IMR-90 (cell line): ENCODE measurements at regions of chr2 and their contacts with region 1.

Region 1: DNA sequence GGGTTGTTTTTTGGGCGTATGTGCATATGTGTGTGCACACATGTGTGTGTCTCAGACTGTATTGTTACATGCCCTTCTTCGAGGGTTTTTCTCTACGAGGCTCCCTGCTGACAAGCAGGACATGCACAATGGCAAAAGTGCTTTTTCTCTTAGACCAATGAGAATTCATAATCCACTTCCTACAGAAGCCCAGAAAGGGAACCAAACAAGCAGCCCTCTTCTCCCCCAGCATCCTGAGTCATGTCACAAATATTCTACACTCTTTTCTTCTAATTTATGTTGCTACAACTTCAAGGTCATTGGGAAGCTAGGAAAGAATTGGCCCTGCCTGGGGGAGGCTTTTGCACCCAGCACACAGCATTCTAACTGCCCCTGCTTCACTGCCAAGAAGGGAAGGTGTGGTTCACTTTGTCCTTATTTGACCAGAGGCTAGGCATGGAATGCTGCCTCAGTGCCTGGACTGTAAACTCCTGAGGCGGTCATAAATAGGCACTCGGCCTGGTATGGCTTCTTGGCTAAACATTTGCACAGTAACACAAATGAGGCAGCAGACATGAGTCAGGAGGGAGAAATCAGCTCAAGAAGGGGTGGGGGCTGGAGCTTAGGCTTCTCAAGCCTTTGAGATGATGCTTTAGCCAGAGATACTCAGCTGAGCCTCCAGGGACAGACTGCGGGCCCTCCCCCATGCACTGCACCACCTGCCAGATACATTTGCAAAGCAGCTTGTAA is 92.7 kb upstream of the KLF7 start:
- DNase-seq: peak; percentile 100
- ATAC-seq: peak; percentile 76
- H3K4me3 ChIP-seq: no peak overlapping the region
- H3K27ac ChIP-seq: peak overlapping the region; percentile 99
- H3K4me1 ChIP-seq: peaks cover 56% of the 10 kb centered on the region
- H3K27me3 ChIP-seq: no peaks in the 10 kb centered on the region
- CTCF ChIP-seq: peak; percentile 14; the same call in 1 of the 2 replicates
- POLR2A ChIP-seq: peak; percentile 40
- RAD21 ChIP-seq: peak; percentile 45

Region 2: DNA sequence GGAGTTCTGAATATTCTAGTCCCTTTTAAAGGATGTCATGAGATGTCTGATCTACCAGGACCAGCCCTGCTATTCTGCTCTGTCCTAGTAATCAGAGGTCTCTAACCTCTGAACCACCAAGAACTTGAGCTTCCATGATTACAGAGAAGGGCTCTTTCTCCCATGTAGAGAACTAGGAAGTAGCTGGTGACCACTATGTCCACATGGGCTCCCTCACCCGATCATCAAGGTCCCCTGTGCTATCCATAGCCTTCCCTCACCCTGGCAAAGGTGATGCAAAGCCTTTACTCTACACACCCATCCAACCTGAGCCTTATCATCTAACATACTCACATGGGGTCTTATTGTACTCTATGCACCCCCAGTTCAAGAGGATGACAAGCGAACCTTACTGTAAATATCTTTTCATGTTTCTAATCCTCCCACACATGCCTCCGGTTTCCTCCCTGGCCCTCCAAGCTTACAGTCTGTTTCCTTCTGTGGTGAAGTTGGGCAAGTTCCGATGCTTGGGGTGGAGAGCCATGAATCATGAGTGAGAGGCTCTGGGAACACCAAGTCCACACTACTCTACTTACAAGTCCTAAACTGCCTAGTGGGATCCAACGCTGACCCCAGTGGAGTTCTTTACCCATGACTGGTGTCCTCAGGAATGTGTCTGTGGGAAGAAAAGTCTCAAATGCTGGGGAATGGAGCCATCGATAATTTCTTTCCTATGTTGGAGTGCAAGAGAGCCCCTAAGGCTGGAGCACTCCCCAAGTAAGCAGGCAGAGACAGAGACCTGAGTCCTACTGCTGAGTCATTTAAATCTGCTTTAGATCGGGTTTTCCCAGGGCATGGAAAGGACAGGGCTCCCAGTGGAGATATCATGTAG is 19.4 kb before region 1 on chr2:
- CTCF ChIA-PET with region 1: interaction called, 5 read pairs
- POLR2A ChIA-PET with region 1: interaction called, 11 read pairs
- dilution Hi-C with region 1: no loop called
- in situ Hi-C with region 1: no loop called
- intact Hi-C with region 1: loop called (anchors 2 kb)
- DNase-seq: peak; percentile 100
- ATAC-seq: peak; percentile 91
- H3K4me3 ChIP-seq: no peak overlapping the region
- H3K27ac ChIP-seq: peak overlapping the region; percentile 95
- H3K4me1 ChIP-seq: peaks cover 20% of the 10 kb centered on the region
- H3K27me3 ChIP-seq: no peaks in the 10 kb centered on the region
- CTCF ChIP-seq: no peak
- POLR2A ChIP-seq: peak; percentile 68; the same call in 1 of the 2 replicates
- RAD21 ChIP-seq: peak; percentile 13; the same call in 1 of the 2 replicates

Region 3: GRCh38 chr2:207311316-207312005 is 53.0 kb after region 1 on chr2:
- CTCF ChIA-PET with region 1: interaction called, 3 read pairs
- POLR2A ChIA-PET with region 1: no interaction called
- dilution Hi-C with region 1: no loop called
- in situ Hi-C with region 1: no loop called
- intact Hi-C with region 1: loop called (anchors 2 kb)
- DNase-seq: peak; percentile 100
- ATAC-seq: peak; percentile 82
- H3K4me3 ChIP-seq: no peak overlapping the region
- H3K27ac ChIP-seq: peak overlapping the region; percentile 44; the same call in 1 of the 2 replicates
- H3K4me1 ChIP-seq: peaks cover 12% of the 10 kb centered on the region
- H3K27me3 ChIP-seq: no peaks in the 10 kb centered on the region
- CTCF ChIP-seq: peak; percentile 51
- POLR2A ChIP-seq: no peak; the same call in 1 of the 2 replicates
- RAD21 ChIP-seq: peak; percentile 65

Region 4: DNA sequence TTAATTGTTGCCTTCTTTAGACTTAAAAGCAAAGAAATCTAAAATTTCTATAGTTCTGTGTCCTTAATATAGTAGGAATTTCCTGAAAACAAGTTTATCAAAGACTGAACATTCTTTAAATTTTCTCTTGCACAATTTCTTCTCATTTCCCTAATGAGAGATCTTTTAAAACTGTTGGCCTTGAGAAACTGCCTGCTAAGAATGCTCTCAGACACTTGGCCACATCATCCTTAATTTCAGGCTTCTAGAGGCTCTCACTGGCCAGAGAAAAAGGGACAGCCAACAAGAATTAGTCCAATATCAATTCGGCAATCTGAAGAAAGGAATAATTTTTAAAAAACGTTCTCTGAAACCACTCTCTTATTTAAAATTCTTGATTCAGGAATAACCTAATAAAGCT is 104.3 kb after region 1 on chr2:
- CTCF ChIA-PET with region 1: no interaction called
- POLR2A ChIA-PET with region 1: no interaction called
- dilution Hi-C with region 1: no loop called
- in situ Hi-C with region 1: no loop called
- intact Hi-C with region 1: no loop called
- DNase-seq: no peak
- ATAC-seq: no peak
- H3K4me3 ChIP-seq: no peak overlapping the region
- H3K27ac ChIP-seq: no peak overlapping the region
- H3K4me1 ChIP-seq: no peaks in the 10 kb centered on the region
- H3K27me3 ChIP-seq: no peaks in the 10 kb centered on the region
- CTCF ChIP-seq: no peak
- POLR2A ChIP-seq: no peak
- RAD21 ChIP-seq: no peak

Region 5: DNA sequence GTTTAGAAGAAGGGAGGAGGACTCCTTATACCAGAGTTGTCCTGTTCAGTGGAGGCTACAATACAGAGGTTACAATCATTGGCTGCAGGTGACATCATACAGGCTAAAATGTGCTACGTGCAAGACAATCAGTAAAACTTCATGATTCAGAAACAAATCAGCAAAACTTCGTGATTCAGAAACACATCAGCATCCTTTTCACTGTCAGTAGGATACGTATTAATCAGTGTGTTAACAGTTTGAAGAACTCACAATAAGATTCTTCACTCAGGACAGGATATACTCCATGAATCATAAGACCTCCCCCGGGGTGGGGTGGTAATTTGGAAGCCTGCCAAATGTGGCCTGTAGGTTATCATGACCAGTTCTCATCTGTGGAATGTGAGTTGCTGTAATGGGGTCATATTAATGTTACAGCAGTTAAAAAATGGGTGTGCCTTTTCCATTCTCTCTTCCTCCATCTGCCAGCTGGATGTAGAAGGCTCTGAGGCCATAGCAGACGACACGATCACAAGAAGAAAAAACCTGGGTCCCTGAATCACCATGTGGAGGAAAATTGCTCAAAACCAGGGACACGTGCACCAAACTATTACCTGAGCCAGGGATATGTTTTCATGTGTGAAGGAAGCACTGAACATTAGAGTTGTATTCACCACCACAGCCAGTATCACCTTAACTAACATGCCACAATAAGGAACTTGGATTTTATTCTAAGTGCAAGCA is 136.5 kb after region 1 on chr2:
- CTCF ChIA-PET with region 1: no interaction called
- POLR2A ChIA-PET with region 1: no interaction called
- dilution Hi-C with region 1: no loop called
- in situ Hi-C with region 1: no loop called
- intact Hi-C with region 1: loop called (anchors 2 kb)
- DNase-seq: peak; percentile 99
- ATAC-seq: peak; percentile 90
- H3K4me3 ChIP-seq: no peak overlapping the region
- H3K27ac ChIP-seq: peak overlapping the region; percentile 98
- H3K4me1 ChIP-seq: peaks cover 10% of the 10 kb centered on the region
- H3K27me3 ChIP-seq: no peaks in the 10 kb centered on the region
- CTCF ChIP-seq: no peak
- POLR2A ChIP-seq: no peak
- RAD21 ChIP-seq: peak; percentile 3

Region 6: DNA sequence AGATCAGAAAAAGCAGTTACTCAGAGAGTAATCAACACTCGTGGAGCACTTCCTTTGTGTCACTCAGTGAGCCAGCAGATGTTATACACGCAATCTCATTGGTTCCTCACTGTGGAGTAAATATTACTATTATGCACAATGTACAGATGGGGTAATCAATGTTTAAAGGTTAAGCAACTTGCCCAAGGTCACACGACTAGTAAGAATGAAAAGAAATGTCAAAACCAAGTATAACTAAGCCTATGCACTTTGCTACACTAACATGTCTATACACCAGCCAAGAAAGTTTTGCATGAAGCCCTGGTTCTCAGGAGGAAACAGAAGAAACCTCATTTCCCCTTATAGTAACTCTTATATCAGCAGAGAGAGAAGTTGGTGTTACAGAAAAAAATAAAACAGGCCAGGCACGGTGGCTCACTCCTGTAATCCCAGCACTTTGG is 361.4 kb after region 1 on chr2:
- CTCF ChIA-PET with region 1: no interaction called
- POLR2A ChIA-PET with region 1: no interaction called
- dilution Hi-C with region 1: no loop called
- in situ Hi-C with region 1: no loop called
- intact Hi-C with region 1: loop called (anchors 10 kb)
- DNase-seq: no peak
- ATAC-seq: no peak
- H3K4me3 ChIP-seq: no peak overlapping the region
- H3K27ac ChIP-seq: no peak overlapping the region
- H3K4me1 ChIP-seq: peaks cover 12% of the 10 kb centered on the region
- H3K27me3 ChIP-seq: no peaks in the 10 kb centered on the region
- CTCF ChIP-seq: no peak
- POLR2A ChIP-seq: no peak
- RAD21 ChIP-seq: no peak